Mammary epithelial cell (primary cell): ENCODE measurements at regions of chr20 and their contacts with region 1.

Region 1: DNA sequence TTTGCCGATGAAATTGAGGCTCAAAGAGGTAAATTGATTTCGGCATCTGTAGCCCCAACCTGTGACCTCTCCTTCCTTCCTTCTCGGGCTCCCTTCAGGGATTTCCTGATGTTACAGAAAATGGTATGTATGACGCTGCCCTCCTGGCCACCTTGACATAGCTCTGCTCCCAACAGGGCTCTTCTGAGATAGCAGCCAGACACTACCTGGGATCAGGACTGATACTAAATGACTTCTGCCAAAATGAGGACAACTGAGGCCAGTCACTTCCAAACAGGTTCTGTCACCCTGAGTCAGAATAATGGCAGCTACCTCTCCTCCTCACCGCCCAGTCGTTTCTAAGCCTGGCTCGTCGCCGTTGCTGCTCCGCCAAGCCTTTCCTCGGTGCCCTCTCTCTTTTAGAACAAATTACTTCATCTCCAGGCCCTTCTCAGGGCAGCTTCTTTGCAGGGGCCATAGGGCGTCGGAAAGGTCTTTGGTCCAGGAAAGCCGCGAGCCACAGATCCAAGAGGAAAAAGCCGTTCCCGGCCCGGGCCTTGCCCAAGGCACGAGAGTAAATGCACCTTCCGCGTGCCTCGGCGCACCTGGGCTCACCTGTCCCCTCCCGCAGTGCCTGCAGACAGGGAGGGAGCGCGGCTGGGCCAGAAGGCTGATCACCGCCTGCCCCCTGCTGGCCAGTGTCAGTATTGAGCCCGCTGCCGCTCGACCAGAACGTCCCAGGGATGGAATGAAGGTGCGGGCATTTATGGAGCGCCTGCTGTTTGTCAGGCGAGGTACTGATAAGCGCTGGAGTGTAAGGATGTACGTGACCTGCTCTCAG is 904 bp upstream of the LPIN3 start:
- DNase-seq: peak; percentile 87
- H3K4me3 ChIP-seq: peak overlapping the region; percentile 28 to 47 (median 29)
- H3K27ac ChIP-seq: peak overlapping the region; percentile 64
- H3K4me1 ChIP-seq: peaks cover 20% of the 10 kb centered on the region
- H3K27me3 ChIP-seq: no peaks in the 10 kb centered on the region
- CTCF ChIP-seq: peak; percentile 88 to 97

Region 2: GRCh38 chr20:40990542-40991120 is 349.1 kb before region 1 on chr20:
- CTCF ChIA-PET with region 1: no interaction called
- dilution Hi-C with region 1: no loop called
- in situ Hi-C with region 1: loop called in 1 of 2 experiments (anchors 25 kb)
- intact Hi-C with region 1: no loop called
- DNase-seq: peak; percentile 82
- H3K4me3 ChIP-seq: no peak overlapping the region
- H3K27ac ChIP-seq: no peak overlapping the region
- H3K4me1 ChIP-seq: peaks cover 17% of the 10 kb centered on the region
- H3K27me3 ChIP-seq: no peaks in the 10 kb centered on the region
- CTCF ChIP-seq: peak; percentile 92 to 95

Region 3: DNA sequence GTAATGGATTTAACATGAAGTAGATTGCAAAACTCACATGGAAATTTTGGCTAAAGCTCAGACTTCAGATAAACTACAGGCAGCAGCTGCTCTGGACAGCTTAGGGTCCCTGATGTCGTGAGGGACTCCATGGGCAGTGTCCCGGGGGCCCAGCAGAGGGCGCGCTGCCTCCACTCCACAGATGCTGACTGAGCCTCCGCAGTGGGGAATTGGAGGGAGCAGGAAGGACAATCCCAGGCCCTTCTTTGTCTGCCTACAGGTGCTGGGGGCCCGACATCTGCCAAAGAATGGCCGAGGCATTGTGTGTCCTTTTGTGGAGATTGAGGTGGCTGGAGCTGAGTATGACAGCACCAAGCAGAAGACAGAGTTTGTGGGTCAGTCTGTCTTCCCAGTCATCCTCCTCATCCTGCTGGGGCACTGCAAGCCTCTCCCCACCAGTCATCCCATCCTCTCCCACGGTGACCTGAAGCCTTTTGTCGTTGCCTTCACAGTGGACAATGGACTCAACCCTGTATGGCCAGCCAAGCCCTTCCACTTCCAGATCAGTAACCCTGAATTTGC is 166.5 kb before region 1 on chr20:
- CTCF ChIA-PET with region 1: interaction called, 14 read pairs
- dilution Hi-C with region 1: no loop called
- in situ Hi-C with region 1: loop called (anchors 5 kb)
- intact Hi-C with region 1: loop called (anchors 1 kb)
- DNase-seq: peak; percentile 51
- H3K4me3 ChIP-seq: no peak overlapping the region
- H3K27ac ChIP-seq: no peak overlapping the region
- H3K4me1 ChIP-seq: peaks cover 74% of the 10 kb centered on the region
- H3K27me3 ChIP-seq: no peaks in the 10 kb centered on the region
- CTCF ChIP-seq: peak; percentile 94 to 99

Region 4: DNA sequence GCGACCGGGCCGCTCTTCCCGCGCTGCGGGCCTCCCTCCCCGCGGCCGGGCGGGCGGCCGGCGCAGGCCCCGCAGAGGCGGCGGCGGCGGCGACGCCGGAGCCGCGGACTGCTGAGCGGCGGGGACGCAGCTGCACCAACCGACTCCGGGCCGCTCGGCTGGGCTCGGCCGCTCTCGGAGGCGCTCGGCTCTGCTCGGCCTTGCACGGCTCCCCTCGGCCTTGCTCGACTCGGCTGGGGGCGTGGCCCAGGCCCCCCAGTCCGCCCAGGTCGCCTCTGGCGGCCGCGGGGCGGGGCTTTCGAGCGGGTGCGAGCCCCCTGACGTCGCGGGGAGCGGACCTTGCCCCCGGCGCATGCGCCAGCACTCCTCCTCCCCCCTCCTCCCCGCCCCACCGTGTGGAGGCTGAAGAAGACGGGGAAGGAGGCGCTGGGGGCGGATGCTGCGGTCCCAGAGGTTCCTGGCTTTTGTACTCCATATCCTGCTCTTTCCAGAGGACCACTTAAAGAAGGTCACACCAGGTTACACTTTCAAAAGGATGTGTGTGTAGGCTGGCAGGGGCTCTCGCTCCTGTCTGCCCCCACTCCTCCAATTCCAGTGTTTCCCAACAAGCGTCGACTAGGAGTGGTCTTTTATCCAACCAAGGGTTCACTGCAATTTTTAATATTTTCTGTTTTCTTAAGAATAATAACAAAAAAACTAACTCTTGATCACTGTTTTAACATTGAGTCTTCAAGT is 22.0 kb before region 1 on chr20 and contains the start of gene ZHX3:
- CTCF ChIA-PET with region 1: interaction called, 24 read pairs
- dilution Hi-C with region 1: no loop called
- in situ Hi-C with region 1: no loop called
- intact Hi-C with region 1: no loop called
- DNase-seq: peak; percentile 95
- H3K4me3 ChIP-seq: peak within 1 kb of the TSS; percentile 79 to 94 (median 79)
- H3K27ac ChIP-seq: peak within 1 kb of the TSS; percentile 92
- H3K4me1 ChIP-seq: peaks cover 16% of the 10 kb centered on the region
- H3K27me3 ChIP-seq: no peaks in the 10 kb centered on the region
- CTCF ChIP-seq: no peak
- total RNA-seq, gene ZHX3: 27.0 to 39.7 TPM

Region 5: DNA sequence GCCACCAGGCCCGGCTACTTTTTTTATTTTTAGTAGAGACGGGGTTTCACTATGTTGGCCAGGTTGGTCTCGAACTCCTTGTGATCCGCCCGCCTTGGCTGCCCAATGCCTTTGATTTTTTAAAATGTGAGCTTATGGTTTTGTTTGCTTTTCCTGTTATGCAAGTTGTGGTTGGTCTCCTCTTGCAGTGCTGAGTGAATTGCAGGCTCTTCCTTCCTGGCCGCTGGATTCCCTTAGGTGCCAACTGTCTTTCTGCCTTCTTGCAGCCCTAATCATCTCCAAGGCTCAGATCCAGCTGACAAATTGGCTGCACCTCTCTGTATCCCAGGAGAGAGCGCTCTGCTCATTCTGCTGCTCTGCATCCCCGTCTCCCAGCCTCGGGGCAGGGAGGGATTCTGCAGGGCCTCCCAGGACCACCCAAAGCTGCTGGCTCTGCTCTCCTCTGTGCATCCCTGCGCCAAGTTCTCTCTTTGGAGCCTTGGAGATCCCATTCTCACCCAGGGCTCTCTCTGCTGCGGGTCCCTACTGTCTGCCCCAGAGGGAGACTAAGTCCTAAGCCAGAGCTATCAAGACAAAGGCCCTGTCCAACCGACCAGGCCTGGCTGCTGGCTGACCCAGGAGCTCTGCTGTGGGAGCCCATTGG is 41.0 kb after region 1 on chr20:
- CTCF ChIA-PET with region 1: no interaction called
- dilution Hi-C with region 1: no loop called
- in situ Hi-C with region 1: no loop called
- intact Hi-C with region 1: no loop called
- DNase-seq: no peak
- H3K4me3 ChIP-seq: no peak overlapping the region
- H3K27ac ChIP-seq: no peak overlapping the region
- H3K4me1 ChIP-seq: no peaks in the 10 kb centered on the region
- H3K27me3 ChIP-seq: peaks cover 2% of the 10 kb centered on the region
- CTCF ChIP-seq: no peak

Region 6: GRCh38 chr20:41617931-41618806 is 278.5 kb after region 1 on chr20 and contains the start of gene CHD6:
- CTCF ChIA-PET with region 1: interaction called, 32 read pairs
- dilution Hi-C with region 1: no loop called
- in situ Hi-C with region 1: no loop called
- intact Hi-C with region 1: loop called (anchors 5 kb)
- DNase-seq: peak; percentile 99
- H3K4me3 ChIP-seq: peak within 1 kb of the TSS; percentile 71 to 91 (median 74)
- H3K27ac ChIP-seq: peak within 1 kb of the TSS; percentile 71
- H3K4me1 ChIP-seq: peaks cover 12% of the 10 kb centered on the region
- H3K27me3 ChIP-seq: no peaks in the 10 kb centered on the region
- CTCF ChIP-seq: no peak
- total RNA-seq, gene CHD6: 27.0 to 28.2 TPM

Region 7: DNA sequence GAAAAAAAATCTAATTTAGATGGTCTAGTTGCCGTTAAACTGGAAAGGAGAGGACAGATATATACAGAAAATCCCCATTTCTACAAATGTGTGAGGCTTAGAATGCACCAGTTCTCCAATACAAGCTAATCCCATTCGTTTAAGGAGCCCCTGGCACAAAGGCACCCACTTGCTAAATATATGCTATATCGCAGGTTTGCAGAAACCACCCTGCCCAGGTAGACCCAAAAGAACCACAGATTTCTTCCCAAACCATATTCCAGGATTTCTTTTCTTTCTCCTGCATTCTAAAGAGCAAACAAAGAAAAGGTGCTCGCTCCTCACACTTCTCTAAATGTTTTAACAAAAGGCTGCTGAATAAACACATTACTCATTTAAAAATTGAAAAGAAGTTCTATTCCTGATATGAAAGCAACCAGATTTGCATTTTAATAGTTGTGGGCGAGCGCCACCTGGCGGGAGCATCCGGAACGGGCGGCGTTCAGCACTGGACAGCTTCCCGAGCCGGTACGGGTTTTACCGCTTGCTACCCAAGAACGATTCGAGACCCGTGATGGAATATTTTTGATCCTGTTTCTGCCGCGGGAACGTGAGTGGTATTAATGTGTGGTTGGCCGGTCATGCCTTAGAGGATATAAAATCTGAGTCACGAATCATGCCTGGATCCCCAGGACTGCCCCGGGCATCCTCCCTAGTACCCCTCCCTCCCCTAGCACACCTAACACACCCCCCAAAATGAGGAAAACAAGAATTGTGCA is 1847.9 kb after region 1 on chr20:
- CTCF ChIA-PET with region 1: no interaction called
- dilution Hi-C with region 1: no loop called
- in situ Hi-C with region 1: no loop called
- intact Hi-C with region 1: loop called (anchors 5 kb)
- DNase-seq: peak; percentile 29
- H3K4me3 ChIP-seq: no peak overlapping the region
- H3K27ac ChIP-seq: no peak overlapping the region
- H3K4me1 ChIP-seq: no peaks in the 10 kb centered on the region
- H3K27me3 ChIP-seq: peaks cover 14% of the 10 kb centered on the region
- CTCF ChIP-seq: peak; percentile 83 to 92